ENCODE measurements at regions of chr7 and their contacts with region 1.

Region 1: DNA sequence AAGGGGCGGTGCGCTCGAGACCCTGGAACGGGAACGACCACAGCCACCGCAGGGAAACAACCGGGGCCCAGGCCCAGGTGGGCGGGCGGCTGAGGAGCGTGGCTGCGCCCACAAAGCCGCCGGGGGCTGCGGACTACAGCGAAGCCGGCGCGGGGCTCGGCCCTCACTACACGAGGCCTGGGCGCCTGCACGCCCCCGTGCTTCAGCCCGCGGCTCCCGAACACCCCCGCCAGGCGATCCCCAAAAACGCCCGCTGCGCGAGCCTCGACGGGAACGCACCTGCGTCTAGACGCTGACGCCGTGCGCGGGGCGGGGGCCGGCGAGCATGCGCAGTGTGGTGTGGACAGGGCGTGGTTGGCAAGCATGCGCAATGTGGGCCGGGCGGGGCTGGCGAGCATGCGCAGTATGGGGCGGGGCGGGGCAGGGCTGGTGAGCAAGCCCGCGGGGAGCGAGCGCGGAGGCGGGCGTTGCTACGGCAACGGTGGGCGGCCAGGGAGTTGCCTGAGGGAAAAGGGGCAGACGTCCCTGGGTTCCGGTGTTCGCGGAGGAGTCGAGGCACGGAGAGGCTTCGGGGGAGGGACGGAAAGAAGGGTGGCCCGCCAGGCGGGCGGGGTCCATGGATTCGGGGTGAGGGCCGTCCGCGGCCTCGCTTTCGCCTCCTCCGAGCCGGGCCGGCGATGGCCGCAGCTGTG is at the start of gene RNF32:
- DNase-seq: peak; percentile 98
- H3K4me3 Mint-ChIP-seq: peak within 1 kb of the TSS; percentile 78
- H3K27ac Mint-ChIP-seq: no peak within 1 kb of the TSS
- H3K4me1 Mint-ChIP-seq: peaks cover 10% of the 10 kb centered on the region
- H3K27me3 Mint-ChIP-seq: peaks cover 28% of the 10 kb centered on the region
- total RNA-seq, gene RNF32: 0.31 to 0.64 TPM

Region 2: GRCh38 chr7:155815332-155816191 is 824.8 kb before region 1 on chr7:
- CTCF ChIA-PET with region 1: no interaction called
- intact Hi-C with region 1: loop called (anchors 2 kb)
- DNase-seq: peak; percentile 87
- H3K4me3 Mint-ChIP-seq: no peak overlapping the region
- H3K27ac Mint-ChIP-seq: no peak overlapping the region
- H3K4me1 Mint-ChIP-seq: peaks cover 17% of the 10 kb centered on the region
- H3K27me3 Mint-ChIP-seq: peaks cover 41% of the 10 kb centered on the region

Region 3: DNA sequence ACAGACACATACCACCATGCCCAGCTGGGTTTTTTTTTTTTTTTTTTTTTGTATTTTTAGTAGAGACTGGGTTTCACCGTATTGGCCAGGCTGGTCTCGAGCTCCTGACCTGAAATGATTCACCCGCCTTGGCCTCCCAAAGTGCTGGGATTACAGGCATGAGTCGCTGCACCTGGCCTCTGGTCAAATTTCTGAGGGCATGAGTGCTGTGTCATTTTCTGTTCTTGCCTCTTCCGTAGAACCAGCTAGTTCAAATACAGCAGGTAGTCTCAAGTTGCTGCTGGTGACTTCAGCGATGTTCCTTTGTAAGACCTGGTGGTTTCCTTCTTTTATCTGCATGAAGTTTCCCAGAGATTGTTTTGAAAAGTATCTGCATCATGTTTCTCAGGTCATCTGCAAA is 693.4 kb before region 1 on chr7:
- CTCF ChIA-PET with region 1: no interaction called
- intact Hi-C with region 1: no loop called
- DNase-seq: no peak
- H3K4me3 Mint-ChIP-seq: no peak overlapping the region
- H3K27ac Mint-ChIP-seq: no peak overlapping the region
- H3K4me1 Mint-ChIP-seq: peaks cover 10% of the 10 kb centered on the region
- H3K27me3 Mint-ChIP-seq: peaks cover 3% of the 10 kb centered on the region

Region 4: GRCh38 chr7:155961241-155962190 is 678.9 kb before region 1 on chr7:
- CTCF ChIA-PET with region 1: no interaction called
- intact Hi-C with region 1: loop called (anchors 10 kb)
- DNase-seq: no peak
- H3K4me3 Mint-ChIP-seq: no peak overlapping the region
- H3K27ac Mint-ChIP-seq: no peak overlapping the region
- H3K4me1 Mint-ChIP-seq: peaks cover 20% of the 10 kb centered on the region
- H3K27me3 Mint-ChIP-seq: peaks cover 8% of the 10 kb centered on the region

Region 5: DNA sequence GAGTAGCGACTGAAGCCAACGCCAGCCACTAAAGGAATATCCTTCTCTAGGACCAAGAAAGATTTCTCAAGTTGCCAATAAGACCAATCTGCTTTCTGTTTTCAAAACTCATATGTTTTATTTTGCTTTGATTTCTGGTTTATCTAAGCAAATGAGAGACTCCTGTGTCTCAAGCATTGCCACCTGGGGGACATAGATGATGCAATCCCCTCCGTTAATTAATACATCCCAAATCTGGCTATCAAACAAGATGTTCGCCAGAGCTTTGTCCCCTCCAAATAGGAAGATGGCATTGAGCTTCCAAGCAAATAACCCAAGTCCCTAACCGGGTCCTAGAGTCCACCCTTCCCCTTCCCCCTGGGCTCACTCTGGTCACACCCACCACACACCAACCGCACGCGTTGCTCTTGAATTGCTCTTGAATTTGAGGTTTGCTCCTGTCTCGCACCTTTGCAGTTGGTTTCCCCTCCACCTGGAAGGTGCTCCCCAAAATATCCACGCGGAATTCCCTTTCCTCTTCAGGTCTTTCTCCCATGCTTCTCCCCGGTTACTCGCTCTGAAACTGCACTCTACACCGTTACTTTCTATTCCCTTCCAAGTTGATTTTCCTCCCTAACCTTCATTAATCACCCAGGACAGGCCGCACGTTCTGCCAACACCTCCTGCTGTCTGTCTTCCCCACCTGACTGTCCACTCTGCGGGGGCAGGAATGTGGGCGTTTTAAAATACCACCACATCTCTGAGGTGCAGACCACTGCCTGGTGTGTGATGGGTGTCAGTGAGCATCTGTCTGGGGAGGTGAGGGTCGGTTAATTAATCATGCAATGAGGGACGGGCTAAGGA is 64.0 kb before region 1 on chr7:
- CTCF ChIA-PET with region 1: no interaction called
- intact Hi-C with region 1: no loop called
- DNase-seq: no peak
- H3K4me3 Mint-ChIP-seq: no peak overlapping the region
- H3K27ac Mint-ChIP-seq: no peak overlapping the region
- H3K4me1 Mint-ChIP-seq: no peaks in the 10 kb centered on the region
- H3K27me3 Mint-ChIP-seq: peaks cover 23% of the 10 kb centered on the region

Region 6: GRCh38 chr7:156612930-156613329 is 27.5 kb before region 1 on chr7:
- CTCF ChIA-PET with region 1: no interaction called
- intact Hi-C with region 1: loop called (anchors 1 kb)
- DNase-seq: peak; percentile 78
- H3K4me3 Mint-ChIP-seq: no peak overlapping the region
- H3K27ac Mint-ChIP-seq: no peak overlapping the region
- H3K4me1 Mint-ChIP-seq: peaks cover 24% of the 10 kb centered on the region
- H3K27me3 Mint-ChIP-seq: peaks cover 38% of the 10 kb centered on the region

Region 7: GRCh38 chr7:156773966-156774365 is 133.6 kb after region 1 on chr7:
- CTCF ChIA-PET with region 1: no interaction called
- intact Hi-C with region 1: loop called (anchors 10 kb)
- DNase-seq: no peak
- H3K4me3 Mint-ChIP-seq: no peak overlapping the region
- H3K27ac Mint-ChIP-seq: no peak overlapping the region
- H3K4me1 Mint-ChIP-seq: peaks cover 28% of the 10 kb centered on the region
- H3K27me3 Mint-ChIP-seq: no peaks in the 10 kb centered on the region

Region 8: DNA sequence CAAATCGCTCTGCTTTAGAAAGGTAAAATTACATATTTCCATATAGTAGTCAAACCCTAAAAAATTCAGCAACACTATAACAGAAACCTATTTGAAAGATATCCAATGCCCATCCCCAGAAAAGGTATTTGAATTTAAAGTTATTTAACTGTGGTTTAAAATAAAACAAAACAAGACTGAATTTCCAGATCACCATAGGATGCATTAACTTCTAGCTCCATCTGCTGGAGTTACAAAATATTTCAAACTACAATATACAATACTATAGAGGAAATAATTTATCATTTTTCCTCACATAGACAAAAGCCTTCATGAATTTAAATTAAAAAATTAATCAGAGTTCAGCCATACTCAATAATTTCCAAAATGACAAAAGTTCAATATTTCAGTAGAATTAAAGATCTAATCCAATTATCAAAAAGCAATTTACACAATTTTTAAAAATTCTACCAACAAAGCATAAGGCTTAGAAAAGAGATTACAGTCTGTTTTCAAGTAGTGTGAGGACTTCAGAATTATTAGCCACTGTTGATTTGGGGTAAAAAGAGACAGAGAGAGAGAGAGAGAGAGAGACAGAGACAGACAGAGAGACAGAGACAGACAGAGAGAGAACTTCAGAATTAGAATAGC is 176.7 kb after region 1 on chr7:
- CTCF ChIA-PET with region 1: no interaction called
- intact Hi-C with region 1: loop called (anchors 2 kb)
- DNase-seq: no peak
- H3K4me3 Mint-ChIP-seq: no peak overlapping the region
- H3K27ac Mint-ChIP-seq: no peak overlapping the region
- H3K4me1 Mint-ChIP-seq: no peaks in the 10 kb centered on the region
- H3K27me3 Mint-ChIP-seq: no peaks in the 10 kb centered on the region

Measured in activated naive CD4-positive, alpha-beta T cell treated with anti-CD3 and anti-CD28 coated beads for 36 hours (primary cell).